ENCODE measurements at regions of chr3 and their contacts with region 1.

Region 1: GRCh38 chr3:66407611-66408218 is 93.1 kb downstream of the LRIG1 start:
- DNase-seq: no peak
- H3K4me3 ChIP-seq: no peak overlapping the region
- H3K27ac ChIP-seq: no peak overlapping the region
- H3K27me3 ChIP-seq: no peaks in the 10 kb centered on the region
- CTCF ChIP-seq: peak; percentile 82

Region 2: DNA sequence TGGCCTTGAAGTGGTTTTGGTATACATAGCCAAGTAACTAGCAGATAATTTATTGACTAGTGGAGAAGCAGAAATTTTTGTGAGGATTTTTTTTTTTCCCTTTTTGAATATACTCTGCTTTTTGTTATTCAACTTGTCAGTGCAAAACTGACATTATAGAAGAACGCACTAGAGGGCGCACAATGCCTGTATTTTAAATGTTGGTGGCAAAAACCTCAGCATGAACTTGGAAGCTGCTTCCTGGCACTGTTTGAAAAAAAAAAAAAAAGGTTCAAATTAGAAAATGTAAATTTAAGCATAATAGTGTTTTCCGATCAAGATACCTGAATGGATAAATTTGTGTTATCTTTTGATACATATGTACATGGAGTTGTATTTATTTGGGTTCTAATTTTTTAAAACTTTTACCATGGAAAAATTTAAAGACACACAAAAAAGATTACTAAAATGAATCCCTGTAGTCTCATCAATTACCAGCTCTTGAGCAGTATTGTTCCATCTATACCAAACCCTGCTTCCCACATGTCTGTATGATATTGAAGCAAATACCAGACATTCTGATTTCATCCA is 130.9 kb before region 1 on chr3:
- CTCF ChIA-PET with region 1: interaction called, 27 read pairs
- POLR2A ChIA-PET with region 1: no interaction called
- DNase-seq: peak; percentile 65
- H3K4me3 ChIP-seq: no peak overlapping the region
- H3K27ac ChIP-seq: no peak overlapping the region
- H3K27me3 ChIP-seq: no peaks in the 10 kb centered on the region
- CTCF ChIP-seq: peak; percentile 66

Region 3: GRCh38 chr3:66418475-66418931 is 10.8 kb after region 1 on chr3:
- CTCF ChIA-PET with region 1: interaction called, 26 read pairs
- POLR2A ChIA-PET with region 1: no interaction called
- DNase-seq: no peak
- H3K4me3 ChIP-seq: no peak overlapping the region
- H3K27ac ChIP-seq: no peak overlapping the region
- H3K27me3 ChIP-seq: no peaks in the 10 kb centered on the region
- CTCF ChIP-seq: no peak

Region 4: DNA sequence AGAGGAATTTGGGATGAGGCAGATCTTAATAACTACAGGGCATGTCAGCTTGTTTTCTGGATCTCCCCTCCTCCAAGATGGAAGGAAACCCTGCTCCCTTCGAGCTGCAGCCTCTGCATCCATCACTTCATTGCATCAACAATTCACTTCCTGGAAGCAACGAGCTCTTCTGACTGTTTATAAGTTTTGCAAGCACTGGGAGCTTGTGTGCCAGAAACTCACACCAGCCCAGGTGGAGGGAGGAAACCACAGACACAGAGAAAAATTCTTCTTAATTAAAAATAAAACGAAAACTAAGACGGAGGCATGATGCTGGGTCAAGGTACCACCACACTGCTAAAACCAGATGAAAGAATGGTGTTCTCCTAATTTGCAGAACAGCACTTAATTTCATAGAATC is 82.5 kb after region 1 on chr3:
- CTCF ChIA-PET with region 1: interaction called, 27 read pairs
- POLR2A ChIA-PET with region 1: no interaction called
- DNase-seq: peak; percentile 76
- H3K4me3 ChIP-seq: peak overlapping the region; percentile 35
- H3K27ac ChIP-seq: peak overlapping the region; percentile 58
- H3K27me3 ChIP-seq: no peaks in the 10 kb centered on the region
- CTCF ChIP-seq: no peak

Region 5: GRCh38 chr3:66822186-66823008 is 414.7 kb after region 1 on chr3:
- CTCF ChIA-PET with region 1: interaction called, 68 read pairs
- POLR2A ChIA-PET with region 1: no interaction called
- DNase-seq: peak; percentile 42
- H3K4me3 ChIP-seq: no peak overlapping the region
- H3K27ac ChIP-seq: no peak overlapping the region
- H3K27me3 ChIP-seq: peaks cover 2% of the 10 kb centered on the region
- CTCF ChIP-seq: peak; percentile 84